Heart right ventricle (tissue), 16 donors: ENCODE measurements at regions of chr16 and their contacts with region 1.

Region 1: GRCh38 chr16:2082160-2082982 is 34.6 kb downstream of the TSC2 start:
- DNase-seq: peak; percentile 34 to 43
- ATAC-seq: peak; percentile 20 to 53 (median 33)
- H3K4me3 ChIP-seq: no peak overlapping the region
- H3K27ac ChIP-seq: peak overlapping the region in 8 of 10 donors; percentile 12 to 64 (median 50)
- H3K4me1 ChIP-seq: peaks cover 5 to 33% (median 28%) of the 10 kb centered on the region in 9 donors
- H3K27me3 ChIP-seq: no peaks in the 10 kb centered on the region
- CTCF ChIP-seq: peak in 4 of 9 donors; percentile 11 to 27 (median 16)

Region 2: GRCh38 chr16:2047330-2048115 is 34.8 kb before region 1 on chr16 and contains the starts of genes NTHL1 and TSC2:
- intact Hi-C with region 1: loop called in 3 of 10 experiments (anchors 2 to 5 kb)
- DNase-seq: peak; percentile 97
- ATAC-seq: peak; percentile 89 to 95 (median 92)
- H3K4me3 ChIP-seq: peak within 1 kb of the TSS; percentile 51 to 97 (median 88)
- H3K27ac ChIP-seq: peak within 1 kb of the TSS; percentile 64 to 96 (median 84)
- H3K4me1 ChIP-seq: peaks cover 16 to 64% (median 50%) of the 10 kb centered on the region in 9 donors
- H3K27me3 ChIP-seq: no peaks in the 10 kb centered on the region
- CTCF ChIP-seq: peak in 8 of 9 donors; percentile 28 to 73 (median 63)
- total RNA-seq, gene NTHL1: 9.8 to 24.9 (median 12.3) TPM
- total RNA-seq, gene TSC2: 54.7 to 87.0 (median 71.5) TPM

Region 3: GRCh38 chr16:2056681-2057407 is 25.5 kb before region 1 on chr16:
- intact Hi-C with region 1: loop called in 2 of 10 experiments (anchors 5 kb)
- DNase-seq: no peak
- ATAC-seq: peak in 3 of 8 donors; percentile 15 to 56 (median 17)
- H3K4me3 ChIP-seq: no peak overlapping the region
- H3K27ac ChIP-seq: no peak overlapping the region
- H3K4me1 ChIP-seq: peaks cover 0 to 4% (median 0%) of the 10 kb centered on the region in 9 donors
- H3K27me3 ChIP-seq: no peaks in the 10 kb centered on the region
- CTCF ChIP-seq: peak in 3 of 9 donors; percentile 6 to 27 (median 11)